Caco-2 (cell line): ENCODE measurements at regions of chr6 and their contacts with region 1.

Region 1: DNA sequence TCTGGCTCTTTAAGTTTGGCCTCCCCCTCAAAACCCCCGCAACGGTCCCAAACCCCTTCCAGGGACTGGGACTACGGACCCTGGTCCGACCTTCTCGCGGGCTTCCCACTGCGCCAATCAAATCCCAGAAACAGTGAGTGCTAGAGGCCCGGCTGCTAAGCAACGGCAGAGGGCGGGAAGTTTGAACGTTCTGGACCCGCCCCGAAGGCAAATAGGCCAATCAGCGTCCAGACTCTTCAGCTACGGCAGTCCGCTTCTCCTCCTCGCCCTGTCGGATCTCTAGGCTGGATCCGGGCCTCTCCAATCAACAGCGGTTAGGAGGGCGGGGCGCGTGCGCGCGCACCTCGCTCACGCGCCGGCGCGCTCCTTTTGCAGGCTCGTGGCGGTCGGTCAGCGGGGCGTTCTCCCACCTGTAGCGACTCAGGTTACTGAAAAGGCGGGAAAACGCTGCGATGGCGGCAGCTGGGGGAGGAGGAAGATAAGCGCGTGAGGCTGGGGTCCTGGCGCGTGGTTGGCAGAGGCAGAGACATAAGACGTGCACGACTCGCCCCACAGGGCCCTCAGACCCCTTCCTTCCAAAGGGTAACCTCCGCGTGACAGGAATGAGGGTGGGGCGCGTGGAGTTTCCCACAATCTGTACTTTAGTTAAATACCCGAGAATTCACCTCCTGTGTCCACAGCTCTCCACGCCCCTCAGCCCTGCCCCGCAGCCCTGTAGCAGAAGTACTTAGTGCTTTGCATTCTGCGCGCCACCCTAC is at the start of gene MSH5:
- DNase-seq: peak; percentile 99
- H3K4me3 ChIP-seq: peak within 1 kb of the TSS; percentile 69
- H3K4me3 Mint-ChIP-seq: peak within 1 kb of the TSS; percentile 95
- H3K27ac Mint-ChIP-seq: peak within 1 kb of the TSS; percentile 98
- H3K4me1 ChIP-seq: peaks cover 23% of the 10 kb centered on the region
- H3K4me1 Mint-ChIP-seq: peaks cover 22% of the 10 kb centered on the region
- H3K27me3 ChIP-seq: no peaks in the 10 kb centered on the region
- H3K27me3 Mint-ChIP-seq: no peaks in the 10 kb centered on the region
- CTCF ChIP-seq: no peak
- total RNA-seq, gene MSH5: 49.6 and 51.0 TPM in 2 replicates

Region 2: DNA sequence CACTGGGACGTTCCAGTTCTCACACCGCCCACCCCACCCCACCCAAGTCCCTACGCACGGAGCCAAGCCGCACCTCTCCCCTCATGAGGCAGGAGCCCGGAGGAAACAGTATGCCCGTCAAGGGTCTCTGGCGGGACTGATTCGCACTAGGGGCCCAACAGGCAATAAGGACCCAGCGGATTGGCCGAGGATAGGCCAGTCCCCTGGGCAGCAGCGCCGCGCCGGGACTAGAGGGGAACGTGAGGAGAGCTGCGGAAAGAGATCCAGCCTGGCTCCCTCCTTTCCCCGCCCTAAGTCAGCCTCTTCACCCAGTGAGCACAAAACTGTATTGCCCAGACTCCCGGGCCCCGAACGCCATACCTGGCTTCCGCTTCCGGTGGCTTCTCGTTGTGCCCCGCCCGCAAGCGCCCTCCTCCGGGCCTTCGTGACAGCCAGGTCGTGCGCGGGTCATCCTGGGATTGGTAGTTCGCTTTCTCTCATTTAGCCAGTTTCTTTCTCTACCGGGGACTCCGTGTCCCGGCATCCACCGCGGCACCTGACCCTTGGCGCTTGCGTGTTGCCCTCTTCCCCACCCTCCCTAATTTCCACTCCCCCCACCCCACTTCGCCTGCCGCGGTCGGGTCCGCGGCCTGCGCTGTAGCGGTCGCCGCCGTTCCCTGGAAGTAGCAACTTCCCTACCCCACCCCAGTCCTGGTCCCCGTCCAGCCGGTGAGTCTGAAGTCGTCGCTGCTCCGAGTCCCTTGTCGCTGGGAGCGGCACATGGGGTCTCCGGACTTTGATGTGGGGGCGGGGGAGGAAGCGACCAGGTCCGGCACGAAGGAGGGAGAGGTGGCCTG is 74.1 kb before region 1 on chr6 and contains the start of gene CSNK2B:
- CTCF ChIA-PET with region 1: interaction called, 3 read pairs
- POLR2A ChIA-PET with region 1: interaction called, 4 read pairs
- intact Hi-C with region 1: loop called (anchors 5 kb)
- DNase-seq: peak; percentile 97 to 98
- H3K4me3 ChIP-seq: peak within 1 kb of the TSS; percentile 90
- H3K4me3 Mint-ChIP-seq: peak within 1 kb of the TSS; percentile 86
- H3K27ac Mint-ChIP-seq: peak within 1 kb of the TSS; percentile 96
- H3K4me1 ChIP-seq: peaks cover 17% of the 10 kb centered on the region
- H3K4me1 Mint-ChIP-seq: peaks cover 25% of the 10 kb centered on the region
- H3K27me3 ChIP-seq: no peaks in the 10 kb centered on the region
- H3K27me3 Mint-ChIP-seq: no peaks in the 10 kb centered on the region
- CTCF ChIP-seq: no peak
- total RNA-seq, gene CSNK2B: 219 and 221 TPM in 2 replicates

Region 3: GRCh38 chr6:31729515-31729978 is 10.3 kb before region 1 on chr6:
- CTCF ChIA-PET with region 1: interaction called, 30 read pairs
- POLR2A ChIA-PET with region 1: interaction called, 59 read pairs
- intact Hi-C with region 1: loop called (anchors 1 kb)
- DNase-seq: peak; percentile 94
- H3K4me3 ChIP-seq: peak overlapping the region; percentile 58
- H3K4me3 Mint-ChIP-seq: peak overlapping the region; percentile 87
- H3K27ac Mint-ChIP-seq: peak overlapping the region; percentile 84
- H3K4me1 ChIP-seq: peaks cover 13% of the 10 kb centered on the region
- H3K4me1 Mint-ChIP-seq: peaks cover 27% of the 10 kb centered on the region
- H3K27me3 ChIP-seq: no peaks in the 10 kb centered on the region
- H3K27me3 Mint-ChIP-seq: no peaks in the 10 kb centered on the region
- CTCF ChIP-seq: peak; percentile 75 to 89

Region 4: GRCh38 chr6:31763619-31763940 is 23.8 kb after region 1 on chr6:
- CTCF ChIA-PET with region 1: interaction called, 32 read pairs
- POLR2A ChIA-PET with region 1: interaction called, 14 read pairs
- intact Hi-C with region 1: loop called (anchors 2 kb)
- DNase-seq: peak; percentile 61 to 67
- H3K4me3 ChIP-seq: no peak overlapping the region
- H3K4me3 Mint-ChIP-seq: peak overlapping the region; percentile 4
- H3K27ac Mint-ChIP-seq: peak overlapping the region; percentile 29
- H3K4me1 ChIP-seq: peaks cover 9% of the 10 kb centered on the region
- H3K4me1 Mint-ChIP-seq: peaks cover 10% of the 10 kb centered on the region
- H3K27me3 ChIP-seq: no peaks in the 10 kb centered on the region
- H3K27me3 Mint-ChIP-seq: no peaks in the 10 kb centered on the region
- CTCF ChIP-seq: no peak

Region 5: DNA sequence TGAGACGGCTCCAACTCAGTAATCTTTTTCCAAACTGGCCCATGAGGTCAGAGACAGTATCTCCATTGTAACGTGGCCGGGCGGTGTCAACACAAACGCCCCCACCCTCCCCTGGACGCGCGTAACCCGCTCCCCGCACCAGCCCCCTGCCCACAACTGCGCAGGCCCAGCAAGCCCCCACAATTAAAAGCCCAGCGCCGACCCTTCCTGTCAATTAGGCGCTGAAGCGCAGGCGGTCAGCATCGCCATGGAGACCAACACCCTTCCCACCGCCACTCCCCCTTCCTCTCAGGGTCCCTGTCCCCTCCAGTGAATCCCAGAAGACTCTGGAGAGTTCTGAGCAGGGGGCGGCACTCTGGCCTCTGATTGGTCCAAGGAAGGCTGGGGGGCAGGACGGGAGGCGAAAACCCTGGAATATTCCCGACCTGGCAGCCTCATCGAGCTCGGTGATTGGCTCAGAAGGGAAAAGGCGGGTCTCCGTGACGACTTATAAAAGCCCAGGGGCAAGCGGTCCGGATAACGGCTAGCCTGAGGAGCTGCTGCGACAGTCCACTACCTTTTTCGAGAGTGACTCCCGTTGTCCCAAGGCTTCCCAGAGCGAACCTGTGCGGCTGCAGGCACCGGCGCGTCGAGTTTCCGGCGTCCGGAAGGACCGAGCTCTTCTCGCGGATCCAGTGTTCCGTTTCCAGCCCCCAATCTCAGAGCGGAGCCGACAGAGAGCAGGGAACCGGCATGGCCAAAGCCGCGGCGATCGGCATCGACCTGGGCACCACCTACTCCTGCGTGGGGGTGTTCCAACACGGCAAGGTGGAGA is 75.4 kb after region 1 on chr6 and contains the starts of genes HSPA1A and HSPA1L:
- CTCF ChIA-PET with region 1: no interaction called
- POLR2A ChIA-PET with region 1: interaction called, 23 read pairs
- intact Hi-C with region 1: no loop called
- DNase-seq: peak; percentile 97 to 99
- H3K4me3 ChIP-seq: peak within 1 kb of the TSS; percentile 38
- H3K4me3 Mint-ChIP-seq: peak within 1 kb of the TSS; percentile 89
- H3K27ac Mint-ChIP-seq: peak within 1 kb of the TSS; percentile 96
- H3K4me1 ChIP-seq: peaks cover 30% of the 10 kb centered on the region
- H3K4me1 Mint-ChIP-seq: peaks cover 12% of the 10 kb centered on the region
- H3K27me3 ChIP-seq: no peaks in the 10 kb centered on the region
- H3K27me3 Mint-ChIP-seq: no peaks in the 10 kb centered on the region
- CTCF ChIP-seq: no peak
- total RNA-seq, gene HSPA1A: 77.3 and 96.9 TPM in 2 replicates
- total RNA-seq, gene HSPA1L: 0.86 and 1.6 TPM in 2 replicates

Region 6: DNA sequence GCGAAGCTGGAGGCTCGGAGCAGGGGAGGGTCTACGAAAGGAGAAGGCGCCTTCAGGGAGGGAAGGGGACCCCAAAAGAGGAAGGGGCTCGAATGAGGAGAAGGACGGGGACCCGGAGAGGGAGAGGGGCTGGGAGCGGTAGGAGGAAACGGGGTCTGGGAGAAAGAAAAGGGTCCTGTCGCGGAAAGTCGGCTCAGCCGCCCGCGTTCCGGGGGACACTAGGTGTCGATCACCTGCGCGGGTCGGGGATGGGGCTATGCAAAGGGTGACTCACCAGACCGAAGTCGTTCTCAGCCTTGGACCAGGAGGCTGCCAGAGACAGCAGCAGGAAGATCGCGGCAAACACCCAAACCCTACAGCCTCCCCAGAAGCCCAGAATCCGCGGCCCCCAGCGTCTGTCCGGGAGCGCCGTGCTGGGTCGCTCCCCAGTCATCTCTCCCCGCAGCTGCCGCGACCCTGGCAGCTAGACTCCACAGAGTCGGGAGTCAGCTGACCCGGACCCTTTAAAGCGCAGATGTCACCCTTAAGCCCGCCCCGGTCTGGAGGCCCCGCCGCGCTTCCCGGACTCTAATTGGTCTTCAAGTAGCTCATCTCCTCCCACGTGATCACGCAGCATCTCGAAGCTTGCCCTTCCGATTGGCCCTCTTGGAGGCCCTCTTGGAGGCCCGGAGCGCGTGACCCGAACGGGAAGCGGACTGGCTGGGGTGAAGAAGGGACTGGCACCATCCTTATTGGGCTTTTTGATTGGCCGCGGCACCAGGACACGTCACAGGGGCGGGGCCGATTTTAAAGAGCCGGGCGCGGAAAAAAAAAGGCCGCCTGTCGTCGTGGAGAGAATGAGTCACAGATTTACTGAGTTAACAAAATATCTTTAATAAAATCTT is 122.8 kb after region 1 on chr6 and contains the start of gene NEU1:
- CTCF ChIA-PET with region 1: interaction called, 3 read pairs
- POLR2A ChIA-PET with region 1: interaction called, 14 read pairs
- intact Hi-C with region 1: loop called (anchors 1 kb)
- DNase-seq: peak; percentile 99 to 100
- H3K4me3 ChIP-seq: peak within 1 kb of the TSS; percentile 76
- H3K4me3 Mint-ChIP-seq: peak within 1 kb of the TSS; percentile 100
- H3K27ac Mint-ChIP-seq: peak within 1 kb of the TSS; percentile 100
- H3K4me1 ChIP-seq: peaks cover 14% of the 10 kb centered on the region
- H3K4me1 Mint-ChIP-seq: peaks cover 24% of the 10 kb centered on the region
- H3K27me3 ChIP-seq: no peaks in the 10 kb centered on the region
- H3K27me3 Mint-ChIP-seq: no peaks in the 10 kb centered on the region
- CTCF ChIP-seq: no peak
- total RNA-seq, gene NEU1: 173 and 176 TPM in 2 replicates

Region 7: GRCh38 chr6:32047850-32048766 is 308.3 kb after region 1 on chr6:
- CTCF ChIA-PET with region 1: no interaction called
- POLR2A ChIA-PET with region 1: no interaction called
- intact Hi-C with region 1: no loop called
- DNase-seq: peak; percentile 66 to 75
- H3K4me3 ChIP-seq: no peak overlapping the region
- H3K4me3 Mint-ChIP-seq: no peak overlapping the region
- H3K27ac Mint-ChIP-seq: no peak overlapping the region
- H3K4me1 ChIP-seq: peaks cover 7% of the 10 kb centered on the region
- H3K4me1 Mint-ChIP-seq: no peaks in the 10 kb centered on the region
- H3K27me3 ChIP-seq: no peaks in the 10 kb centered on the region
- H3K27me3 Mint-ChIP-seq: no peaks in the 10 kb centered on the region
- CTCF ChIP-seq: peak; percentile 73 to 83

Region 8: DNA sequence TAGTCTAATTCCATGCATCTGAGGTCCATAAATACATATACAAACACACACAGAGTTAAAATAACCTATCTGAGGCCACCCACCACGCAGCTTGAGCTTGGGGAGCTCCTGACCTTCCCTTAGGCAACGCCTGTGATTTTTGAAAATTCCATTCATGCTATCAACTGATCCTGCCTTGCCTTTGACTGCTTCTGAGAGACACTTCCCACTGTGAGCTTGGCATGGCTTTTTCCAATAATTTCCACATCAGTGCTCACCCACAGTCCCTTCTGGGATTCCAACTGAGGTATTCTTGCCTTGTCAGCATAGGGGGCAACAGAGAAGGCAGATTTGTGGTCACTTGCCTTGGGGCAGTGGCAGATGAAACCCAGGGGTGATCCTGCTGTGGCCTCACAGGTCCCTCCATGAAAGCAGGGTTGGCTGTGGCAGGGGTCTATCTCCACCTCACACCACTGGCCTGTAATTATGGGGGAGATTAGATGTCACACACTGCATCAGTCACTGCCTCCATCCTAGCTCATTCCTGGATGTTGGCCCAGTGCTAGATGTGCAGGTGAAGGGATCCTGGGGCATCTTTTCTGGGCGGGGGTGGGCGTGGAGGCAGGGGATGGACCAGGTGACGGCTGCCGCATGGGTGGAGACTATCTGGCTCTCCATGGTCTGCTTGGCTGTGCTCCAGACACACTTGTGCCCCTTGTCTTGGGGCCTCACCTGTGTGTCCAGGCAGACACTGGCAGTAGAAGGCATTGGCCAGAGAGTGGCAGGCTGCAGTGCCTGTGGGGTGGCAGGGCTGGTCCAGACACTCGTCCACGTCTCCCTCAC is 463.8 kb after region 1 on chr6:
- CTCF ChIA-PET with region 1: no interaction called
- POLR2A ChIA-PET with region 1: no interaction called
- intact Hi-C with region 1: no loop called
- DNase-seq: no peak
- H3K4me3 ChIP-seq: no peak overlapping the region
- H3K4me3 Mint-ChIP-seq: no peak overlapping the region
- H3K27ac Mint-ChIP-seq: no peak overlapping the region
- H3K4me1 ChIP-seq: no peaks in the 10 kb centered on the region
- H3K4me1 Mint-ChIP-seq: no peaks in the 10 kb centered on the region
- H3K27me3 ChIP-seq: no peaks in the 10 kb centered on the region; the same call in 1 of the 2 replicates
- H3K27me3 Mint-ChIP-seq: peaks cover 4% of the 10 kb centered on the region
- CTCF ChIP-seq: no peak